HCT116 (cell line): ENCODE measurements at regions of chr16 and their contacts with region 1.

Region 1: DNA sequence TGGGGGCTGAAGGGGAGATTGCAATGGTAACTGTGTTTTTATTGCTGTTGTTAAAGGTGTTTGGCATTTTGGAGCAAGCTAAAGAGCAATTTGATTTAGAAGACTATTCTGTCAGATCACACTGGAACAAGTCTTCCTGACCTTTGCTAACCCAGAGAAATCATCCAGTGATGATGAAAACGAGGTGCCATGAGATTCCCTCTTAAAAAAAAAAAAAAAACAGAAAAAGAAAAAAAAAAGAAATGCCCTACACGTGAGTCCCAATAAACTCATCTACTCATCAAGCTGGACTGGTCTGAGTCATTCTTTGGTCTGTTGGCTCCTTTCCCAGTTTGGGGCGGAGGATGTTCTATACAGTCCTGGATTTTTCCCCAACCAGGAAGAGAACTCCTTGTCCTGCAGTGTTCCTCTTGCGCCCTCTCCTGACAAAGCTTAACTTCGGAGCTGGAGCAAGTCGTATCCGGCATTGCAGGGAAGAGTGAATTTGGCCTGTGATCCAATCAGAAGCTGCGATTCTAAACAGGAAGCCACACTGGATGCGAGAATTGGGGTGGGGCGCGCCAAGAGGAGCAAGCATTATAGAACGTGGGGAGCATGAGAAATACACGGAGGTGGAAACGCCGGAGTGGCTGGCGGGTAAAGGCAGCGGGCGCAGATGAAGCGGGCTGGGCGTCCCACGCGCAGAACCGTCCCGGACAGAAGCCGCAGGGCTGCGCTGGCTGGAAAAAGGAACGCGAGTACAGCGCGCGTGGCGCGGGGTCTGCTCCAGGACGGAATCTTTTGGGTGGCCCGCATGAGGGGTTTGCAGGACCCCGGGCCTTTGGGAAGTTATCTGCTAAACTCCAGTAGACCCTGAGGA is 22.4 kb upstream of the CRYM start:
- DNase-seq: peak; percentile 100
- ATAC-seq: peak; percentile 81
- H3K4me3 ChIP-seq: peak overlapping the region; percentile 63 to 74
- H3K27ac ChIP-seq: peak overlapping the region; percentile 85
- H3K4me1 ChIP-seq: peaks cover 12 to 34% of the 10 kb centered on the region in 2 experiments
- H3K27me3 ChIP-seq: no peaks in the 10 kb centered on the region
- CTCF ChIP-seq: peak; percentile 91 to 97 (median 95)
- POLR2A ChIP-seq: peak; percentile 38
- RAD21 ChIP-seq: peak; percentile 99

Region 2: GRCh38 chr16:20806168-20807050 is 494.1 kb before region 1 on chr16 and contains the starts of genes ERI2 and REXO5:
- CTCF ChIA-PET with region 1: no interaction called
- POLR2A ChIA-PET with region 1: no interaction called
- RAD21 ChIA-PET with region 1: no interaction called
- intact Hi-C with region 1: loop called (anchors 1 kb)
- DNase-seq: peak; percentile 91
- ATAC-seq: peak; percentile 84
- H3K4me3 ChIP-seq: peak within 1 kb of the TSS; percentile 92 to 95
- H3K27ac ChIP-seq: peak within 1 kb of the TSS; percentile 90
- H3K4me1 ChIP-seq: peaks cover 8 to 16% of the 10 kb centered on the region in 2 experiments
- H3K27me3 ChIP-seq: no peaks in the 10 kb centered on the region
- CTCF ChIP-seq: peak; percentile 32 to 45 (median 44); a peak in 5 of 6 replicates
- POLR2A ChIP-seq: peak; percentile 95
- RAD21 ChIP-seq: no peak
- total RNA-seq, gene ERI2: 42.1 TPM
- total RNA-seq, gene REXO5: 10.5 TPM

Region 3: DNA sequence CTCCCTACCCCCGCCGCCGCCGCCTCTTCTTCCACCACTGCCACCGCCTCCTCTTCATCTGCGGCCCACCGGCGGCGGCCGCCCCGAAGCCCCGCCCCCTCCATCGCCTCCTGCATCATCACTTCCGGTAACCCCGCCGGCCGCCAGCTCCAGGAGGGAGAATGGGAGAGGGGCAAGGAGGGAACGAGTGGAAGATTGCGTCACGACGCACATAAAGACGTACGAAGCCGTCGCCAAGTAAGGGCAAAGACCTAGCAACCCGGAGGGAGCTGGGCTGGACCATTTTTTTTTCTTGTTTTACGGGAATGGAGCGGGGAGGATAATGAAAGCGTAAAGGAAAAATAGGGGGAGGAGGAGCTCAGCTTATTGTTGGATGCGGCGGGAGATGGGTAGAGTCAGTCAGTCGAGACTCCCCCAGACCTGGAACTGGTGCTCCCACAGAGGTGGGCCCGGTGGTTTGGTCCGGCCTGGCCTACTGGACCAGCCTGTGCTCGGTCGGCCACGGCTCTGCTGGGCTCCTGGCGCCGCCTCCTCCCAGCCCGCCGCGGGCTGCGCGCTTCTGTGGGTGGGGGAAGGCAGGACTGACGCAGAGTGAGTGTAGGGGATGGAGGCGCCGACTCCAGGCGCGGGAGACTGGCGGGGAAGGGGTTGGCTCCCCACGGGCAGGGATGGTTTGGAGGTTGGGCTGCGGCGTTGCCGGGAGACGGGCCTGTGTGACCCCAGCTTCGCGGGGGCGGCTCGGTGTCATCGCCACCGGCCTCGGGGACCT is 400.1 kb before region 1 on chr16 and contains the starts of genes DCUN1D3 and LYRM1:
- CTCF ChIA-PET with region 1: no interaction called
- POLR2A ChIA-PET with region 1: no interaction called
- RAD21 ChIA-PET with region 1: no interaction called
- intact Hi-C with region 1: loop called (anchors 10 kb)
- DNase-seq: peak; percentile 98
- ATAC-seq: peak; percentile 81
- H3K4me3 ChIP-seq: peak within 1 kb of the TSS; percentile 86 to 88
- H3K27ac ChIP-seq: peak within 1 kb of the TSS; percentile 90
- H3K4me1 ChIP-seq: peaks cover 45 to 68% of the 10 kb centered on the region in 2 experiments
- H3K27me3 ChIP-seq: no peaks in the 10 kb centered on the region
- CTCF ChIP-seq: no peak
- POLR2A ChIP-seq: peak; percentile 79
- RAD21 ChIP-seq: no peak
- total RNA-seq, gene DCUN1D3: 16.4 TPM
- total RNA-seq, gene LYRM1: 26.7 TPM

Region 4: DNA sequence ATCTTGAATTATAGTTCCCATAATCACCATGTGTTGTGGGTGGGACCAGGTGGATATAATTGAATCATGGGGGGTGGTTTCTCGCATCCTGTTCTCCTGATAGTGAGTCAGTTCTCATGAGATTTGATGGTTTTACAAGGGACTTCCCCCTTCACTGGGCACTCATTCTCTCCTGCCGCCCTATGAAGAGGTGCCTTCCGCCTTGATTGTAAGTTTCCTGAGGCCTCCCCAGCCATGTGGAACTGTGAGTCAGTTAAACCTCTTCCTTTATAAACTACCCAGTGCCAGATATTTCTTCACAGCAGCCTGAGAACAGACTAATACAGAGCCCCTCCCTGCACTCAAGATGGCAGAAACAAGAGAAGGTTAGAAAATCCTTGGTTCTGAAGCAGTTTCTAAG is 115.7 kb before region 1 on chr16:
- CTCF ChIA-PET with region 1: interaction called, 101 read pairs
- POLR2A ChIA-PET with region 1: interaction called, 18 read pairs
- RAD21 ChIA-PET with region 1: interaction called, 9 to 11 read pairs
- intact Hi-C with region 1: loop called (anchors 1 kb)
- DNase-seq: no peak
- ATAC-seq: no peak
- H3K4me3 ChIP-seq: no peak overlapping the region
- H3K27ac ChIP-seq: no peak overlapping the region
- H3K4me1 ChIP-seq: peaks cover 8 to 17% of the 10 kb centered on the region in 2 experiments; a peak in 3 of 4 replicates
- H3K27me3 ChIP-seq: no peaks in the 10 kb centered on the region
- CTCF ChIP-seq: no peak
- POLR2A ChIP-seq: no peak
- RAD21 ChIP-seq: no peak

Region 5: DNA sequence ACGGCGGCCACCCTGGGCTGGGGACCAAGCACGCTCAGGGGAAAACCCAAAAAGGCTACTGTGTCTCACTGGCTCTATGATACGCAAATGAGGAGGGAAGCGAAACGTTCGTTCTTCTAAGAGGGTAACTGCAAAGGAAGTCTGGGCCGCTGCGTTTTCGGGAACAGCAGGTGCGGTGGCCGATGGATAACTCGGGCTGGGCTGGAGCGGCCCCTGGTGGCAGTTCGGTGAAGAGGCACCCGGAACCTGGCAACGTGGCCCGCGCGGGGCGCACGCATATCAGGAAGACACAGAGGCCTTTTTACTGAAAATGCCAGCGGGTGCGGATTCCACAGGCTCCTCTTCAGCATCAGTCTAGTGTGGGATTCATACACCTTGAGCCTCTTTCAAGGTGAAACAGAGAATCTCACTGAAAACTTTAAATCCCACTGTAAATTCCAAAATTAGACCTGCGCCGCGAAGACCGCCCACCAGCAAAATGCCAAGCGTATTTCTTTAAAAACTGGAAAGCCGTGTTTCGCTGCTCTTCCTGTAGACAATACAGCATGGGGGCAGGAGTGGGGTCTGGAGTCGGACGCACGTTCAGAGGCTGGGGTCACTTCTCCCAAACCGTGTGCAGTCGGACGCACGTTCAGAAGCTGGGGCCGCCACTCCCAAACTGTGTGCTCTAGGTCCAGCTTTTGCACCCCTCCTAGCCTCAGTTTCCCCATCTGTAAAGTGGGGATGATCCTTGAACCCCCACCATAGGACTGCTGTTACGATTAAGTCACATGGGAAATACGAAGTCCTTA is 254.5 kb after region 1 on chr16:
- CTCF ChIA-PET with region 1: interaction called, 3 read pairs
- POLR2A ChIA-PET with region 1: no interaction called
- RAD21 ChIA-PET with region 1: no interaction called
- intact Hi-C with region 1: loop called (anchors 2 kb)
- DNase-seq: peak; percentile 53
- ATAC-seq: peak; percentile 93
- H3K4me3 ChIP-seq: peak overlapping the region in 1 of 2 experiments; percentile 19; a peak in 2 of 4 replicates
- H3K27ac ChIP-seq: no peak overlapping the region
- H3K4me1 ChIP-seq: peaks cover 0 to 17% of the 10 kb centered on the region in 2 experiments; a peak in 2 of 4 replicates
- H3K27me3 ChIP-seq: no peaks in the 10 kb centered on the region
- CTCF ChIP-seq: peak; percentile 92 to 97 (median 96)
- POLR2A ChIP-seq: no peak
- RAD21 ChIP-seq: peak; percentile 97

Region 6: DNA sequence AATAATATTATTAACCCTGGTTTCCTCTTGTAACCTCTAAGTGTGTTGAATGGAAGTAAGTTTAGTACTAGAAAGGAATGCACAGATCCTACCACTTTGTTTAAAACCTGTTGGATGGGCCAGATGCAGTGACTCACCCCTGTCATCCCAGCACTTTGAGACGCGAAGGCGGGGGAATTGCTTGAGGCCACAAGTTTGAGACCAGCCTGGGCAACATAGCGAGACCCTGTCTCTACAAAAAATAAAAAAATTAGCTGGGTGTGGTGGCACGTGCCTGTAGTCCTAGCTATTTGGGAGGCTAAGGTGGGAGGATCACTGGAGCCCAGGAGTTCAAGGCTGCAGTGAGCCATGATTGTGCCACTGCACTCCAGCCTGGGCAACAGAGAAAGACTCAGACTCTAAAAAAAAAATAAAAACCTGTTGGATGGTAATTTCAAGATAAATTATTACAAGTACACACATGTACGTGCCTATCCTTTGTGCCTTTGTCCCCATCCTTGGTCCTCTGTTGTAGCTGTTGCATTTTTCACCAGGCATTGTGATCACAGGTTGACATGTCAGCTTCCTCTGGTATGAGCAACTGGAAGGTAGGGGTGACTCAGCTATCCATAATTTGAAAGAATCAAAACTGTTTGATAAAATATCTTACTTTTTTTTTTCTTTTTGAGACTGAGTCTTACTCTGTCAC is 268.1 kb after region 1 on chr16:
- CTCF ChIA-PET with region 1: no interaction called
- POLR2A ChIA-PET with region 1: no interaction called
- RAD21 ChIA-PET with region 1: no interaction called
- intact Hi-C with region 1: no loop called
- DNase-seq: no peak
- ATAC-seq: no peak
- H3K4me3 ChIP-seq: no peak overlapping the region
- H3K27ac ChIP-seq: no peak overlapping the region
- H3K4me1 ChIP-seq: peaks cover 0 to 4% of the 10 kb centered on the region in 2 experiments; a peak in 1 of 4 replicates
- H3K27me3 ChIP-seq: no peaks in the 10 kb centered on the region
- CTCF ChIP-seq: no peak
- POLR2A ChIP-seq: no peak
- RAD21 ChIP-seq: no peak